HEK293 (cell line): ENCODE measurements at regions of chrX and their contacts with region 1.

Region 1: GRCh38 chrX:106894392-106894909 is 8.7 kb downstream of the RIPPLY1 start:
- H3K4me3 ChIP-seq: no peak overlapping the region
- H3K27ac ChIP-seq: no peak overlapping the region
- H3K4me1 ChIP-seq: no peaks in the 10 kb centered on the region; the same call in 1 of the 2 replicates
- CTCF ChIP-seq: peak; percentile 79

Region 2: GRCh38 chrX:105822128-105822625 is 1072.3 kb before region 1 on chrX and contains the start of gene NRK:
- CTCF ChIA-PET with region 1: no interaction called
- POLR2A ChIA-PET with region 1: no interaction called
- H3K4me3 ChIP-seq: peak within 1 kb of the TSS; percentile 12
- H3K27ac ChIP-seq: no peak within 1 kb of the TSS
- H3K4me1 ChIP-seq: no peaks in the 10 kb centered on the region
- CTCF ChIP-seq: no peak

Region 3: DNA sequence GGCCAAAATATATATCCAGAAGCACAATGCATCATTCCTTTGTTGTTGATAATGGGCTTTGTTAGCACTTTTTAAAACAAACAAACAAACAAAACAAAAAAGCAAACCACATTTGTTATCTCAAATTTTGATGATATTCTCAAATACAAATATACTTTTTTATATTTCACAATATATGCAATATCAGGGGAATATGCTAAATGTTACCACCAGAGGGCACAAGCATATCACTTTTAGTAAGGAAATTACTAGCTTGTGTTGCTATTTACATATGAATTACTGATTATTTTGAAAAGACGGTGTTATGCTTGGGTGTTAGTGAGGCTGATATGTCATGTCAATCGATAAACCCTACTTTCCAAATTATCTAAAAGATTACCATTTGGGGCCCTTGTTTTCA is 20.4 kb before region 1 on chrX:
- CTCF ChIA-PET with region 1: interaction called, 32 read pairs
- POLR2A ChIA-PET with region 1: no interaction called
- H3K4me3 ChIP-seq: no peak overlapping the region
- H3K27ac ChIP-seq: no peak overlapping the region
- H3K4me1 ChIP-seq: no peaks in the 10 kb centered on the region
- CTCF ChIP-seq: no peak

Region 4: GRCh38 chrX:106906361-106906760 is 11.9 kb after region 1 on chrX:
- CTCF ChIA-PET with region 1: interaction called, 25 read pairs
- POLR2A ChIA-PET with region 1: no interaction called
- H3K4me3 ChIP-seq: no peak overlapping the region
- H3K27ac ChIP-seq: no peak overlapping the region
- H3K4me1 ChIP-seq: no peaks in the 10 kb centered on the region
- CTCF ChIP-seq: no peak

Region 5: GRCh38 chrX:106939566-106939965 is 45.1 kb after region 1 on chrX:
- CTCF ChIA-PET with region 1: interaction called, 10 read pairs
- POLR2A ChIA-PET with region 1: no interaction called
- H3K4me3 ChIP-seq: no peak overlapping the region
- H3K27ac ChIP-seq: no peak overlapping the region
- H3K4me1 ChIP-seq: no peaks in the 10 kb centered on the region
- CTCF ChIP-seq: no peak

Region 6: GRCh38 chrX:106952988-106953387 is 58.5 kb after region 1 on chrX:
- CTCF ChIA-PET with region 1: interaction called, 16 read pairs
- POLR2A ChIA-PET with region 1: no interaction called
- H3K4me3 ChIP-seq: no peak overlapping the region
- H3K27ac ChIP-seq: no peak overlapping the region
- H3K4me1 ChIP-seq: no peaks in the 10 kb centered on the region
- CTCF ChIP-seq: no peak

Region 7: GRCh38 chrX:106959901-106960300 is 65.5 kb after region 1 on chrX:
- CTCF ChIA-PET with region 1: interaction called, 15 read pairs
- POLR2A ChIA-PET with region 1: no interaction called
- H3K4me3 ChIP-seq: no peak overlapping the region
- H3K27ac ChIP-seq: no peak overlapping the region
- H3K4me1 ChIP-seq: no peaks in the 10 kb centered on the region
- CTCF ChIP-seq: no peak